H1 (cell line): ENCODE measurements at regions of chr1 and their contacts with region 1.

Region 1: DNA sequence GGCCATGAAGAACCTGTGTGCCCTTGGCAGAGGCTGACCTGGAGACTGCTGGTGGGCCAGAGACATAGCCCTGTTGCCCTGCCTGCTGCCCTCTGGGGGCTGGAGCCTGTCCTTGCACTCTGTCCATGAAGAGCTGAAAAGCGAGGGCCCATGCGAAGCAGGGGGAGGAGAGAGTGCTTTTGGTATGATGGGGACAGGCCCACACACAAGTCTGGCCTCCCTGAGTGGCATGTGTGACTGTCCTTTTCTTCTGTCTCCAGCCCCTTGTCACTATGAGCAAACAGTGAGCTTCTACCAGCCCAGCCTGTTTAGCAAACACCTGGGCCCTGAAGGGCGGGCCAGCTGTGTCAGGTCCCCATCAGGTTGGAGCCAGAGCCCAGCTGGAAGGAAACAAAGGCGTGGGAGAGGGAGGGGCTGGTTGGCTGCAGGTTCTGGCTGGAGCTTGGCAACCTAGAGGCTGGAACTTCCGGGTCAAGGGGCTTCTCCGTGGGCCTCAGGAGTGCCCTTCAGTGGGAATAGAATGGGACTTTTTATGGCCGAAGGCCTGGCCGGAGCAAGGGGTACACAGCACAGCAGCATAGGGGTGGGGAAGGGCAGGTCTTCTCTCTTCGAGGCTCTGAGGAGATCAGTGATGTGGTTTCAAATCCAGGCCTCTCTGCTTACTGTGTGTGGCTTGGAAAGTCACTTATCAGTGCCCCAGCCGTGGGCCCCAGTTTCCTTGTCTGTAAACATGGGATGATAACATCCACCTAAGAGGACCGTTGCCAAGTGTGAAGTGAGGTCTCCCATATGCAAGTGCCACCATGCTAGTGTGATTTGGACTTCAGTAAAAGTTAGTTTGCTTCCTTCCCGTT is 14.3 kb downstream of the QSOX1 start:
- DNase-seq: peak in 1 of 2 experiments; percentile 76
- H3K4me3 ChIP-seq: no peak overlapping the region
- H3K27ac ChIP-seq: no peak overlapping the region
- H3K4me1 ChIP-seq: peaks cover 6 to 20% (median 16%) of the 10 kb centered on the region in 4 experiments
- H3K27me3 ChIP-seq: no peaks in the 10 kb centered on the region
- CTCF ChIP-seq: peak; percentile 89 to 95 (median 94)
- EP300 ChIP-seq: no peak
- POLR2A ChIP-seq: no peak
- RAD21 ChIP-seq: peak; percentile 61 to 76

Region 2: GRCh38 chr1:180092931-180093559 is 76.0 kb before region 1 on chr1:
- CTCF ChIA-PET with region 1: interaction called, 12 read pairs
- POLR2A ChIA-PET with region 1: interaction called, 3 read pairs
- DNase-seq: no peak
- H3K4me3 ChIP-seq: no peak overlapping the region
- H3K27ac ChIP-seq: no peak overlapping the region
- H3K4me1 ChIP-seq: no peaks in the 10 kb centered on the region
- H3K27me3 ChIP-seq: no peaks in the 10 kb centered on the region
- CTCF ChIP-seq: no peak
- EP300 ChIP-seq: no peak
- POLR2A ChIP-seq: no peak
- RAD21 ChIP-seq: no peak

Region 3: GRCh38 chr1:180112984-180113647 is 55.9 kb before region 1 on chr1:
- CTCF ChIA-PET with region 1: interaction called, 16 read pairs
- POLR2A ChIA-PET with region 1: no interaction called
- DNase-seq: no peak
- H3K4me3 ChIP-seq: no peak overlapping the region
- H3K27ac ChIP-seq: no peak overlapping the region
- H3K4me1 ChIP-seq: no peaks in the 10 kb centered on the region
- H3K27me3 ChIP-seq: no peaks in the 10 kb centered on the region
- CTCF ChIP-seq: no peak
- EP300 ChIP-seq: no peak
- POLR2A ChIP-seq: no peak
- RAD21 ChIP-seq: no peak

Region 4: GRCh38 chr1:180154325-180155181 is 14.5 kb before region 1 on chr1 and contains the start of gene QSOX1:
- CTCF ChIA-PET with region 1: interaction called, 108 read pairs
- POLR2A ChIA-PET with region 1: interaction called, 36 read pairs
- DNase-seq: peak; percentile 34 to 86
- H3K4me3 ChIP-seq: peak within 1 kb of the TSS; percentile 85 to 97 (median 96)
- H3K27ac ChIP-seq: no peak within 1 kb of the TSS; the same call in 1 of the 2 replicates
- H3K4me1 ChIP-seq: peaks cover 1 to 6% (median 3%) of the 10 kb centered on the region in 4 experiments; a peak in 6 of 7 replicates
- H3K27me3 ChIP-seq: peaks cover 0 to 15% (median 8%) of the 10 kb centered on the region in 4 experiments; a peak in 6 of 7 replicates
- CTCF ChIP-seq: no peak
- EP300 ChIP-seq: no peak
- POLR2A ChIP-seq: peak; percentile 61 to 80
- RAD21 ChIP-seq: peak in 1 of 2 experiments; percentile 2; a peak in 1 of 4 replicates
- total RNA-seq, gene QSOX1: 120 and 123 TPM in 2 replicates

Region 5: DNA sequence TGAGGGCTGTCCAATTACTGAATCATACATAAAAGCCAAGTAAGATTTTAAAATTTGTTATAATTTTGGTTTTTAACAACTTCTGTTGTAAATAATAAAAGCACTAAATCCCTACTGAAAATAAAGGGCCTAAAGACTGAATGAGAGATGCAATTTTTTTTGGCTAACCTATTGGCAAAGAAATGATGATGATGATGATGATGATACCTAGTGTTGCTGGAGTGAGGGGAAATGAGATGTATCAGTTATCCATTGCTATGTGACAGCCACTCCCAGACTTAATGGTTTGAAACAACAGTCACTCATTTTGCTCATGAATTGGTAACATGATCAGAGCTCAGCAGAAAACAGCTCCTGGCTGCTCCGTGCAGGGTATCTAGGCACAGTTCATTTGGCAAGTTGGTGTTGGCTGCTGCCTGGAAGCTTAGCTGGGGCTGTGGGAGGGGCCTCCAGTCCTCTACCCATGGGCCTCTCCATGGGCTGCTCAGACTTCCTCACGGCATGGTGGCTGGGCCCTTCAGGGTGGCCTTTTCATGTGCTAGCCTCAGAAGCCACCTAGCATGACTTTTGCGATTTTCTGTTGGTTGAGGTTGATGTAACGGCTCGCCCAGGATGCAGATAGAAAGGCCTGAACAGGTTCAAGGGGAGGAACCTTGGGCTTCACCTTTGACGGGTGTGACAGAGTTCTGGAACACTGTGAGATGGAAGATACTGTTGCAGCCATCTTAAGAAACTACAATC is 35.0 kb after region 1 on chr1:
- CTCF ChIA-PET with region 1: interaction called, 13 read pairs
- POLR2A ChIA-PET with region 1: no interaction called
- DNase-seq: no peak
- H3K4me3 ChIP-seq: no peak overlapping the region
- H3K27ac ChIP-seq: no peak overlapping the region
- H3K4me1 ChIP-seq: no peaks in the 10 kb centered on the region
- H3K27me3 ChIP-seq: no peaks in the 10 kb centered on the region
- CTCF ChIP-seq: no peak
- EP300 ChIP-seq: no peak
- POLR2A ChIP-seq: no peak
- RAD21 ChIP-seq: no peak